Vagina (tissue), 2 donors: ENCODE measurements at regions of chr6 and their contacts with region 1.

Region 1: GRCh38 chr6:136792410-136793262 is at the start of gene MAP3K5:
- DNase-seq: peak in 1 of 2 donors; percentile 94
- H3K4me3 ChIP-seq: peak within 1 kb of the TSS; percentile 91 to 96
- H3K27ac ChIP-seq: peak within 1 kb of the TSS; percentile 94
- H3K4me1 ChIP-seq: peaks cover 49% of the 10 kb centered on the region
- H3K27me3 ChIP-seq: no peaks in the 10 kb centered on the region
- CTCF ChIP-seq: peak in 2 of 3 experiments; percentile 59 to 74
- POLR2A ChIP-seq: no peak
- total RNA-seq, gene MAP3K5: 31.2 TPM

Region 2: DNA sequence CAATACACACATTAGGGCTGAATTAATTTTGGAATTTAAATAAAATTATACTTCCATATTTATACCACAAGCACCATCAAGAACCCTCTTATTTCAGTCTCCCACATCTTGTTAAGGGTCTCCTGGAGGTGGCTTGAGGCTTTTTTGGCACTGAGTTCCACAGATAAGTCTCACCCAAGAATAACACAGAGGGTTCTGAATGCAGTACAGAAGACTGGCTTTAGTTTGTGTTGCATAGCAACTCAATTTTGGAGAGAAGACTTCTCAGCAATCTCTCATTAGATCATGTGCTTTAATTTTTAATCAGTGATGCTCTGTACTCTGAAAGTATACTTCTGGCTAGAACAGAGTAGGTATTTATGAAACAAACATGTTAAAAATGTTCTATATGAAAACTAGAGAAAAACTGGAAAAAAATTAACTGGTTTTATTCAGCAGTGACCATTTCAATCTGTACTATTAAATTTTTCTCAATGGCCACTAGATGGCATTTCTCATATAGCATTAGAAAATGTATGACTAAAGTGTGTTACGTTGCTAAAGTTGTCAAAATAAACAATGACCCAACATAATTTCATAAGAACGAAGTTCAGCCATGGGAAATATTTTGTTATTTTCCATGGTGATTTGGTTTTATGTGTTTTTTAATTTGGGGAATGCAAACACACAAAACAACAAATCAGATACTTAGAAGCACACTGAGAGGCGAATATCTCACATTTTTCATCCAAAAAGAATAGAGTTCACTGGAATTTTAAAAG is 209.7 kb before region 1 on chr6:
- intact Hi-C with region 1: loop called (anchors 10 kb)
- DNase-seq: no peak
- H3K4me3 ChIP-seq: no peak overlapping the region
- H3K27ac ChIP-seq: peak overlapping the region; percentile 54
- H3K4me1 ChIP-seq: peaks cover 8% of the 10 kb centered on the region
- H3K27me3 ChIP-seq: no peaks in the 10 kb centered on the region
- CTCF ChIP-seq: peak in 2 of 3 experiments; percentile 50 to 55
- POLR2A ChIP-seq: no peak

Region 3: GRCh38 chr6:136643850-136644596 is 148.6 kb before region 1 on chr6:
- intact Hi-C with region 1: loop called (anchors 2 kb)
- DNase-seq: no peak
- H3K4me3 ChIP-seq: no peak overlapping the region
- H3K27ac ChIP-seq: peak overlapping the region; percentile 43
- H3K4me1 ChIP-seq: peaks cover 17% of the 10 kb centered on the region
- H3K27me3 ChIP-seq: no peaks in the 10 kb centered on the region
- CTCF ChIP-seq: peak; percentile 45 to 86 (median 78)
- POLR2A ChIP-seq: no peak